CD14-positive monocyte (primary cell): ENCODE measurements at regions of chr1 and their contacts with region 1.

Region 1: GRCh38 chr1:11907275-11908094 is 18.7 kb downstream of the KIAA2013 start:
- DNase-seq: peak; percentile 93
- H3K4me3 ChIP-seq: peak overlapping the region in 1 of 3 experiments; percentile 79
- H3K4me3 Mint-ChIP-seq: peak overlapping the region in 1 of 2 donors; percentile 63
- H3K27ac ChIP-seq: peak overlapping the region; percentile 67 to 100
- H3K27ac Mint-ChIP-seq: peak overlapping the region; percentile 99 to 100 (median 100)
- H3K4me1 ChIP-seq: peaks cover 8 to 11% of the 10 kb centered on the region in 2 donors
- H3K4me1 Mint-ChIP-seq: peaks cover 15% of the 10 kb centered on the region
- H3K27me3 ChIP-seq: no peaks in the 10 kb centered on the region
- H3K27me3 Mint-ChIP-seq: peaks cover 1 to 8% (median 2%) of the 10 kb centered on the region in 3 donors
- CTCF ChIP-seq: peak; percentile 79

Region 2: DNA sequence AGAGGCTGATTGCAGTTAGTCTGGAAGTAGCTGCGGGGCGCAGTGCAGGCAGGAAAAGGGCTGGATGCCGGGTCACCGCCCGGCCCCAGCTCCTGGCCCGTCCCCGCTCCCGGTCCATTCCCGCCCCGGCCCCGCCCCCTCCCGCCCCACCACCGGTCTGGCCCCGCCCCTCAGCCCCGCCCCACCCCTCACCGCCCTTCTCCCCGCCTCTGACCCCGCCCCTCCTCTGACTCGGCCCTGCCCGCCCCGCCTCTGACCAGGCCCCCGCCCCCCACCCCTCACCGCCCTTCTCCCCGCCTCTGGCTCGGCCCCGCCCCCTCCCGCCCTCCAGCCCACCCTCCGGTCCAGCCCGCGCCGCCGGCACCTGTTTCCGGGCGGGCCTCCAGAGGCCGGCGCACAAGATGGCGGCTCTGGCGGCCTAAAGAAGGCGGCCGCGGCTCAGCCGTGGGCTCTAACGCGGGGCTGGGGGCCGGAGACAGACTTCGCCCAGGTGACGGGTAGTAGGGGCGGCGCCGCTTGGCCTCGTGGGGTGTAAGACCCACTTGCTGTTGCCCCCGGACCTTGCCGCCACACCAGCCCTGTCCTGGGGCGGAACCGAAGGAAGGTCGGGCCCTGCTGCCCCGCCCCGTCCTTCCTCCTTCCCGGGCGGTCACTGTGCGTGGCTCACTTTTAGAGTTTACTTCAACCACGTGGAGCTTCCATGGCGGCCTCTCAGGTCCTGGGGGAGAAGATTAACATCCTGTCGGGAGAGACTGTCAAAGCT is 634.5 kb before region 1 on chr1 and contains the start of gene UBIAD1:
- intact Hi-C with region 1: loop called in 1 of 2 experiments (anchors 10 kb)
- DNase-seq: peak; percentile 74 to 88 (median 84)
- H3K4me3 ChIP-seq: peak within 1 kb of the TSS; percentile 69 to 95 (median 84)
- H3K4me3 Mint-ChIP-seq: peak within 1 kb of the TSS; percentile 82 to 87
- H3K27ac ChIP-seq: peak within 1 kb of the TSS; percentile 84 to 94
- H3K27ac Mint-ChIP-seq: peak within 1 kb of the TSS; percentile 79 to 94 (median 87)
- H3K4me1 ChIP-seq: peaks cover 25 to 29% of the 10 kb centered on the region in 2 donors
- H3K4me1 Mint-ChIP-seq: peaks cover 27% of the 10 kb centered on the region
- H3K27me3 ChIP-seq: no peaks in the 10 kb centered on the region
- H3K27me3 Mint-ChIP-seq: peaks cover 0 to 4% (median 0%) of the 10 kb centered on the region in 3 donors
- CTCF ChIP-seq: no peak
- polyA plus RNA-seq, gene UBIAD1: 4.3 to 10.5 (median 9.8) TPM

Region 3: DNA sequence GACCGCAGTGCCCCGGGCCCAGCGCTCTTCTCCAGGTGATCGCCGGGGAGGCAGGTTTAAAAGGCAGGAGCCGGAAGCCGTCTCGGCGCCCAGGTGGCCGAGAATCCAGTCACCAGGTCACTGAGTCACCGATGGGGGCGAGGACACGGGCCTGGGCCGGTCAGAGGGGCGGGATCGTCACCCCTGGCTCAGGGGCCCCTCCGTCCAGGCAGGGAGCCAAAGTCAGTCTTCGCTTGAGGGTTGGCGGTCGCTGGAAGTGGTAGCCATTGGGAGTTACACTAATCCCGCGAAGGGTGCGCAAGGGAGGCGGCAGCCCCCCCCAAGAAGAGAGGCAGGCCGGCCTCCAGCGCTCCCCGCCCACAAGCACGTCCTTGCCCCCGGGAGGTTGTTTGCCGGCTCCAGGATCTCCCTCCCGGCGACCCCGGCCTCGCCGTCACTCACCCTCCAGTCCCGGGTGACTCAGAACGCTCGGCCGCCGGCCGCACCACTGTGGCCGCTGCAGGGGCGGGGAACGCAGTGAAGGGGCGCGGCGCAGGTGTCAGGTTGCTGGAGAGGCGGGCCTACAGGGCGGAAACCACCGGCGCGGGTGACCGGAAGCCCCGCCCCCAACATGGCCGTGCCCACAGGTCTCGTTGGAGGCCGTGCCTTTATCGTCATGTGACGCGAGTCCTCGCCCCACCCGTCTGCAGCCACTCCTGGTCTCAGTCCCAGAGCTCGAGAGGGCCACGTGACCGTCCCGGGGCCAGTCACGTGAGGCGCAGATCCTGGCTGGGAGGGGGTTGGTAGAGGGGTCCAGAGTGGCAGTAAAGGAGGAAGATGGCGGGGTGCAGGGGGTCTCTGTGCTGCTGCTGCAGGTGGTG is 101.8 kb before region 1 on chr1 and contains the starts of genes CLCN6 and MTHFR:
- intact Hi-C with region 1: loop called in 1 of 2 experiments (anchors 5 kb)
- DNase-seq: peak; percentile 99
- H3K4me3 ChIP-seq: peak within 1 kb of the TSS; percentile 72 to 84 (median 83)
- H3K4me3 Mint-ChIP-seq: peak within 1 kb of the TSS; percentile 94 to 99
- H3K27ac ChIP-seq: peak within 1 kb of the TSS; percentile 87 to 98
- H3K27ac Mint-ChIP-seq: peak within 1 kb of the TSS; percentile 99 to 100 (median 99)
- H3K4me1 ChIP-seq: peaks cover 54 to 66% of the 10 kb centered on the region in 2 donors
- H3K4me1 Mint-ChIP-seq: peaks cover 71% of the 10 kb centered on the region
- H3K27me3 ChIP-seq: no peaks in the 10 kb centered on the region
- H3K27me3 Mint-ChIP-seq: peaks cover 0 to 2% (median 1%) of the 10 kb centered on the region in 3 donors
- CTCF ChIP-seq: no peak
- polyA plus RNA-seq, gene CLCN6: 3.8 to 37.1 (median 4.2) TPM
- polyA plus RNA-seq, gene MTHFR: 4.5 to 41.9 (median 8.5) TPM

Region 4: DNA sequence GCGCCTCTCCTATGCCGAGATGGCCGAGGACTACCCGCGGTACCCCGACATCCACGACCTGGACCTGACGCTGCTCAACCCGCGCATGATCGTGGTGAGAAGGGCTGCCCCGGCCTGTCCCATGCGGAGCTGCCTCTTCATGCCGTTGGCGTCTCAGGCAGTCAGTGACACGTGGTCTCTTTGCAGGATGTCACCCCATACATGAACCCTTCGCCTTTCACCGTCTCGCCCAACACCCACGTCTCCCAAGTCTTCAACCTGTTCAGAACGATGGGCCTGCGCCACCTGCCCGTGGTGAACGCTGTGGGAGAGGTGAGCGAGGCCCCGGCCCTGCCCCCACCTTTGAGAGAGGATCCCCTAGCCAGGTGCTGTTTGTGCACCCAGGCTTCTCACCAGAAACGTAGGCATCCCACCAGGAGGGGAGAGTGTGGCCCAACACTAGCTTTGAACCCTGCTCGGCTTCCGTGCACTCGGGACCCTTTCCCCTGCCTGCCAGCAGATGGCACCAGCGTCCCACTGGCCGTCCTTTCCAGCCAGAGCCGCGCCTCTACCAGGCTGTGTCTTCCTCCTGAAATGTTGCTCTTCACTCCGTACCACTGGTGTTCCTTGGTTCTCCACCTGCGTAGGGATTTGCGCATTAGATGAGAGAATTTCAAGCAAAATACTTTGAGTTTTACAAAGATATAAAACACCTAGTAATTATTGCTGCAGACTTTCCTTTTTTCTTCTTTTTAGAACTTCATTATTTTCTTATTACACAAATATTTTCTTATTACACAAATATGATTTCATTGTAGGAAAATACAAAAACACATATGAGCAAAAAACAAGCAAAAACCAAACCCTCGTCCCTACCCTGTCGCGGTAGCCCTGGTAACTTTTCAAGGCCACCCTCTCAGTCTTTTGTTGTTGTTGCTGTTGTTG is 68.9 kb before region 1 on chr1:
- intact Hi-C with region 1: loop called in 1 of 2 experiments (anchors 1 kb)
- DNase-seq: peak; percentile 51 to 64 (median 58)
- H3K4me3 ChIP-seq: no peak overlapping the region
- H3K4me3 Mint-ChIP-seq: no peak overlapping the region
- H3K27ac ChIP-seq: no peak overlapping the region
- H3K27ac Mint-ChIP-seq: peak overlapping the region in 4 of 7 donors; percentile 4 to 66 (median 43)
- H3K4me1 ChIP-seq: peaks cover 27 to 29% of the 10 kb centered on the region in 2 donors
- H3K4me1 Mint-ChIP-seq: peaks cover 31% of the 10 kb centered on the region
- H3K27me3 ChIP-seq: no peaks in the 10 kb centered on the region
- H3K27me3 Mint-ChIP-seq: no peaks in the 10 kb centered on the region
- CTCF ChIP-seq: peak; percentile 99

Region 5: DNA sequence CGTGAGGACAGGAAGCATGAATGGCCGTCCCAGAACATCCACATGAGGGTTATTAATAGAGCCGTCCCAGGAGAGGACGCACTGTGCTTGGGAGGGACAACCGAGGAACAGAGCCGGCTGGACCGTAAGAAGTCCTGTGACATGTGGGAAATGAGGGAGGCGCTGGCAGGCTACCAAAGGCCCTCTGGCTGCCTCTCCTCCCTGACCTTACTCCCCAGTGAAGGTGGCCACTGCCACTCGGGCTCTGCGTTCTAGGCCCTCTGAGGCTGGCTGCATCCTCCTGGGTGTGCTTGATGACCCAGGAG is 33.3 kb before region 1 on chr1:
- intact Hi-C with region 1: no loop called
- DNase-seq: no peak
- H3K4me3 ChIP-seq: no peak overlapping the region
- H3K4me3 Mint-ChIP-seq: no peak overlapping the region
- H3K27ac ChIP-seq: no peak overlapping the region
- H3K27ac Mint-ChIP-seq: no peak overlapping the region
- H3K4me1 ChIP-seq: no peaks in the 10 kb centered on the region
- H3K4me1 Mint-ChIP-seq: no peaks in the 10 kb centered on the region
- H3K27me3 ChIP-seq: no peaks in the 10 kb centered on the region
- H3K27me3 Mint-ChIP-seq: peaks cover 6 to 11% (median 9%) of the 10 kb centered on the region in 3 donors
- CTCF ChIP-seq: no peak

Region 6: DNA sequence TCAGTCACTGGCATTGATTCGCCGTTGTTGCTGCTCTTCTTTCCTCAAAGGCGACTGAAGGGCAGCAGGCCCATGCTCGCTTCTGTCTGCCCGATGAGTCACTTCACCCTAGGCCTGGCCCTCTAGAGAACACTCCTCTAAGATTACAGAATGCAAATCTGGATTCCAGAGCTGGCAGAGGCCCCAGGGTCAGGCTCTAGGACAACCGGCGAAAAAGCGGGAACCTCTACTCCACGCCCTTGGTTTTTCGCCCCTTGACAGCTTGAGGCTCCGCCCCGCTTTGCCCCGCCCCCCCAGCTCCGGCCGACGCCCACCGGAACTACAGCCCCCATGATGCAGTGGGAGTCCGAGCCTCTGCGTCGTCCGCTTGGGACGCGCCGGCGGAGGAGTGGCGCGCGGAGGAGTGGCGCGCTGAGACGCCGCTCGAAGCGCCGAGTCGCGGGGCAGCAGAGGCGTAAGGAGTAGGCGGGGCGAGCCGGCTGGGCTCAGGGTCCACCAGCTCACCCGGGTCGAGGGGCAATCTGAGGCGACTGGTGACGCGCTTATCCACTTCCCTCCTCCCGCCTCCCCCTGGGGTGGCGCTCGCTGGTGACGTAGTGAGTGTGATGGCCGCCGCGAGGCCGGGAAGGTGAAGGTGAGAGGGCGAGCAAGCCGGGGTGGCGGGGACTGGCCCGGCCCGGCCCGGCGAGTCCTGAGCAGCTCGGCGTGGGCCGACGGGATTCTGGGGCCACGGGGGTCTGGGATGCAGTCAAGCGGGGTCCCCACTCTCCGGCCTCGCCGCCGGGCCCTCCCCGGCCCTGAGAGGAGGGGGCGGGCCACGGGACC is 72.6 kb after region 1 on chr1 and contains the start of gene MFN2:
- intact Hi-C with region 1: loop called (anchors 5 kb)
- DNase-seq: peak; percentile 90 to 95 (median 92)
- H3K4me3 ChIP-seq: peak within 1 kb of the TSS; percentile 74 to 91 (median 86)
- H3K4me3 Mint-ChIP-seq: peak within 1 kb of the TSS; percentile 84 to 89
- H3K27ac ChIP-seq: peak within 1 kb of the TSS; percentile 73 to 97
- H3K27ac Mint-ChIP-seq: peak within 1 kb of the TSS; percentile 91 to 97 (median 94)
- H3K4me1 ChIP-seq: peaks cover 51 to 60% of the 10 kb centered on the region in 2 donors
- H3K4me1 Mint-ChIP-seq: peaks cover 60% of the 10 kb centered on the region
- H3K27me3 ChIP-seq: no peaks in the 10 kb centered on the region
- H3K27me3 Mint-ChIP-seq: peaks cover 0 to 1% (median 0%) of the 10 kb centered on the region in 3 donors
- CTCF ChIP-seq: no peak
- polyA plus RNA-seq, gene MFN2: 26.3 to 35.8 (median 30.3) TPM